ENCODE measurements at regions of chr1 and their contacts with region 1.

Region 1: DNA sequence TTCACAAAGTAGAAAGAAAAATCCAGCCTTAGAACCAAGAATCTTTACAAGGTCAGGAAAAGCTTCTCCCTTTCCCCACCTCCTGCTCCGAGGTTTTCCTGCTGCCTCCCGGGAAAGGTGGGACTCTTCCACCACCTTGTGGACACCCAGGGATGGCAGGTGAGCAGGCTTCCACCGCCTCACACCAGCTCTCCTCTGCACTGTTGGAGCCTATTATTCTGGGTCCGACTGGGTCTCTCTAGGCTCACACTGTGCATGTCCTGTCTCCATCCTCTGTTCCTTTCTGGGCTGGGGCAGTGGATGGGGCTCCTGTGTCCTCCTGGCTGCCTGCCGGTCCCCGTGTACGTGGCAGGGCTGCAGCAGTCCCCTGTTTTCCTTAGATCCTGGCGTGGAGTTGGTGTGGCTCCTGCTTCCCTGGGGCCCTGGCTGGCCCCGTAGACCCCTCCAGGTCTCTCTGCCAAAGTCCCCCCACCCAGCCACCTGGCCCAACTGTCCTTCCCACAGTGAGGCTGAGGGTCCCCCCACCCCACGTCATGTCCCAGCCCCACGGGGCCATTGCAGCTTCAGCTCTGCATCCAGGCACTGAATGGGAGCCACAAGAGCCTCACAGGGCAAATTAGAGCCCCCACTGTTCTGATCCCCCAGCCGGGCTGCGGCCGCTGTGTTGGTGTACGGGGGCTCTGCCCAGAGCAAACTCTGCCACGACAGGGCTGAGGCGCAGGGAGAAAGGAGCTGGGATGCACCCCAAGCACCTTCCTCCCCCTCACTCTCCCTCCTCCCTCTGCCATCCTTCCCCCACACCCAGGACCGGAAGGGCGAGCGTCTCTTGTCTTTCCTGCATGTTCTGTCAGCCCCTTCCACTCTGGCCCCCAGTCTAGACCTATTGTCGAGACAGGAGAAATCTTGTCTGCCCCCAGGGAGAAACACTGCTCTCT is 3.3 kb upstream of the SLC45A1 start:
- DNase-seq: peak; percentile 53 to 82
- H3K4me3 ChIP-seq: no peak overlapping the region
- H3K27ac ChIP-seq: peak overlapping the region; percentile 29; the same call in 1 of the 2 replicates
- H3K4me1 ChIP-seq: peaks cover 11% of the 10 kb centered on the region
- H3K27me3 ChIP-seq: no peaks in the 10 kb centered on the region
- CTCF ChIP-seq: peak; percentile 83

Region 2: DNA sequence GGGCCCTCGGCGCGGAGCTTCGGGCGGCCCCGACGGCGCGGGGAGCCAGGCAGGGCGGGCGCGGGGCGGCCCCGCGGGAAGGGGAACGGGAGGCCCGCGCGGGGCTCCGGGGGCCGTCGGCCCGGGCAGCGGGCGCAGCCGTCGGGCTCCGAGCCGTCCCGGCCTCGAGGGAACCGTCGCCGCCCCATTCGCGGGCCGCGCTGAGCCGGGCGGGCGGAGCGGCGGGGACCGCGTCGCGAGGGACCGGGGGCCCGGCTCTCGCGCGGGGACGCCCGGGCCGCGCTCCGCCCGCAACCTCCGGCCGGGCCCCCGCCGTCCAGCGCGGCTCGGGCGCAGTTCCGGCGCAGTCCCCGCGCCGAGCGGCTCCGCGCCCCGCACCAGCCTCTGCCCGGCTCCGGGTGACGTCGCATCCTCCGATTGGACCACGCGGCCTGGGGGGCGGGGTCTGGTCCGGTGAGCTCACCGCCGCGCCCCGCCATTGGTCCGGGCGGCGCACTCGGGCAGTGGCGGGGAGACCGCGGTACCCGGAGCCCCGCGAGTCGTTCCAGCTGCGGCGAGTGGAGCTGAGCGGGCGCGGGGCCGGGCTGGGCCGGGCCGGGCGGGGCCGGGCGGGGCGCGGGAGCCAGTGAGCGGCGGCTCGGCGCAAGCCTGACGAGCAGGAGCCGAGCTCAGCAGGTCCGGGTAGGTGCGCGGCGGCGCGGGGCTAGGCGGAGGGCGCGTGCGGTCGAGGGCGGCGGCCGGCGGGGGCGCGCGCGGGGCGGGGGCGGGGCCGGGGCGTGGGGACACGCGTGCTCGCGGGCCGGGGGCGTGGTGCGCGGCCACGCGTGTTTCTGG is 610.2 kb before region 1 on chr1:
- CTCF ChIA-PET with region 1: no interaction called
- POLR2A ChIA-PET with region 1: no interaction called
- intact Hi-C with region 1: no loop called
- DNase-seq: peak in 1 of 2 experiments; percentile 74
- H3K4me3 ChIP-seq: no peak overlapping the region
- H3K27ac ChIP-seq: no peak overlapping the region
- H3K4me1 ChIP-seq: no peaks in the 10 kb centered on the region
- H3K27me3 ChIP-seq: peaks cover 17% of the 10 kb centered on the region; the same call in 1 of the 2 replicates
- CTCF ChIP-seq: no peak

Region 3: GRCh38 chr1:8015036-8015808 is 299.4 kb before region 1 on chr1:
- CTCF ChIA-PET with region 1: interaction called, 8 read pairs
- POLR2A ChIA-PET with region 1: interaction called, 3 read pairs
- intact Hi-C with region 1: loop called (anchors 1 kb)
- DNase-seq: peak; percentile 58 to 72
- H3K4me3 ChIP-seq: peak overlapping the region; percentile 91; the same call in 1 of the 2 replicates
- H3K27ac ChIP-seq: peak overlapping the region; percentile 90
- H3K4me1 ChIP-seq: peaks cover 75% of the 10 kb centered on the region
- H3K27me3 ChIP-seq: no peaks in the 10 kb centered on the region
- CTCF ChIP-seq: peak; percentile 70

Region 4: DNA sequence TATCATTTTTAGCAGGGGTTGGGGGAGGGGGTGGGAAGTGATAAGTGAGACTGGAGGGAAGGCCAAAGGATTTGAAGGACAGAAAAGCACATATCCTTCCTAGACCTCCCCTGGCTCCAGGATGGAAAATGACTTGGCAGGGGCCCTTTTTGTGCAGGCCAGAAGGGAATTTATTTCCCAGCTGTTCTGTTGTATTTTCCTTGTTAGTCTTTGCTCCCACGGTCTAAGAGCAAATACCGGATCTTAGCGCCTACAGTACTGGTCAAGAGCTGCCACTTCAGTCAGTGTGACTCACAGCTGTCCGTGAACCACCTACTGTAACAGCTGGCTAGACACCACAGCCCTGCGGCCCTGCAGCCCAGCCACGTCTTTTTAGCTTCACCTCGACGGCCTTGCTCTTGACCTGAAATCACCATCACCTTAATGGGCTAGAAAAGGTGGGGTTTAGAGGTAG is 237.5 kb before region 1 on chr1:
- CTCF ChIA-PET with region 1: interaction called, 4 read pairs
- POLR2A ChIA-PET with region 1: no interaction called
- intact Hi-C with region 1: loop called (anchors 1 kb)
- DNase-seq: peak; percentile 67 to 92
- H3K4me3 ChIP-seq: no peak overlapping the region
- H3K27ac ChIP-seq: peak overlapping the region; percentile 98
- H3K4me1 ChIP-seq: peaks cover 69% of the 10 kb centered on the region
- H3K27me3 ChIP-seq: no peaks in the 10 kb centered on the region
- CTCF ChIP-seq: no peak

Region 5: GRCh38 chr1:8137481-8138244 is 176.9 kb before region 1 on chr1:
- CTCF ChIA-PET with region 1: interaction called, 6 read pairs
- POLR2A ChIA-PET with region 1: no interaction called
- intact Hi-C with region 1: loop called (anchors 5 kb)
- DNase-seq: peak; percentile 55 to 94
- H3K4me3 ChIP-seq: peak overlapping the region; percentile 54; the same call in 1 of the 2 replicates
- H3K27ac ChIP-seq: peak overlapping the region; percentile 100
- H3K4me1 ChIP-seq: peaks cover 85% of the 10 kb centered on the region
- H3K27me3 ChIP-seq: no peaks in the 10 kb centered on the region
- CTCF ChIP-seq: no peak

Region 6: DNA sequence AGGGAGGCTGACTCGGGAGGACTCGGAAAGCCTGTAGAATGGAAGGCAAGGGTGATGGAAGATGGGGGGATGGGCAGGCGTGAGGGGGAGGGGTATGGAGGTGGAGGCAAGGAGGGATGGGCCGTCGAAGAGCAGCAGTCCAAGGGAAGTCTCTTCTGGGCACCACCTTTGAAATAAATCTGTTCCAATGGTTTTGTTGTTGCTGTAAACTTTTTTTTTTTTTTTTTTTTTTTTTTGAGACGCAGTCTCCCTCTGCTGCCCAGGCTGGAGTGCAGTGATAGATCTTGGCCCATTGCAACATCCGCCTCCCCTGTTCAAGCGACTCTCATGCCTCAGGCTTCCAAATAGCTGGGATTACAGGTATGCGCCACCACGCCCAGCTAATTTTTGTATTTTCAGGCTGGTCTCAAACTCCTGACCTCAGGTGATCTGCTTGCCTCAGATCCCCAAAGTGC is 75.7 kb before region 1 on chr1:
- CTCF ChIA-PET with region 1: interaction called, 9 read pairs
- POLR2A ChIA-PET with region 1: interaction called, 35 read pairs
- intact Hi-C with region 1: no loop called
- DNase-seq: peak; percentile 60 to 87
- H3K4me3 ChIP-seq: no peak overlapping the region
- H3K27ac ChIP-seq: peak overlapping the region; percentile 95
- H3K4me1 ChIP-seq: peaks cover 24% of the 10 kb centered on the region
- H3K27me3 ChIP-seq: no peaks in the 10 kb centered on the region
- CTCF ChIP-seq: no peak; the same call in 1 of the 2 replicates

Region 7: GRCh38 chr1:8348777-8349491 is 34.3 kb after region 1 on chr1:
- CTCF ChIA-PET with region 1: interaction called, 4 read pairs
- POLR2A ChIA-PET with region 1: no interaction called
- intact Hi-C with region 1: loop called (anchors 2 kb)
- DNase-seq: peak in 1 of 2 experiments; percentile 59
- H3K4me3 ChIP-seq: no peak overlapping the region
- H3K27ac ChIP-seq: no peak overlapping the region
- H3K4me1 ChIP-seq: peaks cover 7% of the 10 kb centered on the region
- H3K27me3 ChIP-seq: no peaks in the 10 kb centered on the region
- CTCF ChIP-seq: peak; percentile 89

Region 8: DNA sequence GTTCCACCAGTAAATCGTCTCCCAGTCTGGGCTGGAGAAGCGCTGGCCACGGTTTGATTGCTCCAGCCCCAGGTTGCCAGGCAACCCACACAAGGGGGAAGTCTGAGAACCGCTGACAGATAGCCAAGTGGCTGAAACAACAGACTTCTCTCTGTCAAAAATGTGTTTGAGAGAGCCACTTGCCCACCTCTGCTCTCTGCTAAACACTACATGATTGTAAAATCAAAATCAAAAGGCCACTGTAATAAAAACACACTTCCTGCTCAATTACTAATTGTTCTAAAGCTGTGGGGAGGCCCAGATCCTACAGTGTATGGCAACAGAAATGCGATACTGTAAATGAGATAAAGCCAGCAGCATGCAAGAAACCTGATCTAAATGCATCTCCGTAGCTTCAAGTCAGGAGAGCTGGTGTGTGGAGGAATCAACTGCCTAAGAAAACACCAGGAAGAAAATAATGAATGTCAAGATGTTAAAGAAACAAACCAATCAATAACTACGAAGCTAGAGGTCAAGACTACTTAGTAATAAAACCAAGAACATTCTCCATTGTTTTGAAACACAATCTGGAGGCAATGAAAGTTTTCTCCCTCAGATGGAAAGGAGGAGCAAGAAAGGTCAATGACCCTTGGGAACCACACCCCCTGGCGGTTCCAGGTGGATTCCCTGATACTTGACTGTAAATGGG is 124.5 kb after region 1 on chr1:
- CTCF ChIA-PET with region 1: no interaction called
- POLR2A ChIA-PET with region 1: no interaction called
- intact Hi-C with region 1: no loop called
- DNase-seq: peak in 1 of 2 experiments; percentile 21
- H3K4me3 ChIP-seq: no peak overlapping the region
- H3K27ac ChIP-seq: no peak overlapping the region
- H3K4me1 ChIP-seq: no peaks in the 10 kb centered on the region
- H3K27me3 ChIP-seq: no peaks in the 10 kb centered on the region
- CTCF ChIP-seq: no peak

Measured in PC-9 (cell line).